ENCODE measurements at regions of chr9 and their contacts with region 1.

Region 1: DNA sequence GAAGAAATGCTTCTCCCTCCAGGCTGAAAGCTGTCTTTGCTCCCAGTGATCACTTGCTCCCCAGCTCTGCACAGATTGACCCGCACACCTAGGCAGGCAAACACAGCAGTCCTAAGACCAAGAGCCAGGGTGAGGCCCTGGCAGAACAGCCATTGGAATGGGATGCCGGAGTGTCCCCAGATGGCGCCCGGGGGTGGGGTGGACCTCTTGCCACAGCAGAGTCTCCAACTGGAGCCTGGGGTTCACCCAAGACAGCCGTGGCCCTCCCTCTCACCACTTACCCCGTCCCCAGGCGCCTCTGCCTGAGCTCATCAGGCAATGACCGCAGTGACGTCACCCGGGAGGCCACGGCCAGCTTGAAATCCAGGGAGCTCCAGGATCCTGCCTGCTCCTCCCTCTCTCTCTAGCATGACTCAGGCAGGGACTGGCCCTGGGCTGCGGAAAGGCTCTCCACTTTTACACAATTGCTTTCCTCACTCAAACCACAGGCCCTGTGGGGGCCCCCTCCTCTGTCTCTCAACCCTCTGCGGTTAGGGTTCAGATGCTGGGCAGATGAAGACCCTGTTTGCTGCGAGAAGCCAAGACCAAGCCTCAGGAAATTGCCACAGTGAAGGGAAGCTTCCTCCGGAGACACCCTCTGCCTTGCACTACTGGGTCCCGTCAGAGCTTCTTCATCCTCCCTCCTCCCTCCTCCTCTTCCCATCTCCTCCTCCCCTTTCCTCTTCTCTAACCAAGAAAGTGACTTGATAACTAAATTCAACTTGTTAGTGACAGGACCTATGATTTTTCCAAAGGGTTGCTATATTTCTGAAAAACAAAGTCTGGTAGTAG is 24.3 kb upstream of the PTGES start:
- DNase-seq: peak; percentile 62 to 88 (median 69)
- ATAC-seq: peak; percentile 62
- H3K4me3 ChIP-seq: no peak overlapping the region
- H3K27ac ChIP-seq: peak overlapping the region in 2 of 4 donors; percentile 11 to 16
- H3K4me1 ChIP-seq: peaks cover 11% of the 10 kb centered on the region
- H3K27me3 ChIP-seq: no peaks in the 10 kb centered on the region
- CTCF ChIP-seq: no peak
- POLR2A ChIP-seq: no peak

Region 2: DNA sequence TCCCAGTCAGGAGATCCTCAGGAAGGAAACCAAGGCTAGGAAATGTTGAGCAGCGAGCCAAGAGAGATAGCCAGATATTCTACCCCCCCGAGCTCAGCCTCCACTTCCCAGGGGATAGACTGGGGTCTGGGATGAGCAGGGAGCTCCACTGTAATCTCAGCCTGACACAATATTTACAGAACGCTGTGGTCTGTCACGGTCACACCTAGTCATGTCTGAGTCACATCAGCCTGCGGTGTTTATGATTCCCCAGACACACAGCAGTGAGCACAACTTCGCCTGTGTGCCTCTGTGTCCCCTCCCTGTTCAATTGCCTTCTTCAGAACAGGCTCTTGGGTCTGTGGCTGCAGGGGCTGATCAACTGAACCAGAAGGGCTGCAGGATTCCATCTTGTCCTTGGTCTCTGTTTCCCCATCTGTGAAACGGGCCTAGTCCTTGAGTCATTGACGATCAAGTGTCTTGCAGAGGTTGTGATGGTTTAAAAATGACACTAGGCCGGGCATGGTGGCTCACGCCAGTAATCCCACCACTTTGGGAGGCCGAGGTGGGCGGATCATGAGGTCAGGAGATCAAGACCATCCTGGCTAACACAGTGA is 120.3 kb before region 1 on chr9:
- intact Hi-C with region 1: loop called (anchors 10 kb)
- DNase-seq: no peak
- ATAC-seq: no peak
- H3K4me3 ChIP-seq: no peak overlapping the region
- H3K27ac ChIP-seq: no peak overlapping the region
- H3K4me1 ChIP-seq: peaks cover 3% of the 10 kb centered on the region
- H3K27me3 ChIP-seq: no peaks in the 10 kb centered on the region
- CTCF ChIP-seq: no peak
- POLR2A ChIP-seq: no peak

Region 3: DNA sequence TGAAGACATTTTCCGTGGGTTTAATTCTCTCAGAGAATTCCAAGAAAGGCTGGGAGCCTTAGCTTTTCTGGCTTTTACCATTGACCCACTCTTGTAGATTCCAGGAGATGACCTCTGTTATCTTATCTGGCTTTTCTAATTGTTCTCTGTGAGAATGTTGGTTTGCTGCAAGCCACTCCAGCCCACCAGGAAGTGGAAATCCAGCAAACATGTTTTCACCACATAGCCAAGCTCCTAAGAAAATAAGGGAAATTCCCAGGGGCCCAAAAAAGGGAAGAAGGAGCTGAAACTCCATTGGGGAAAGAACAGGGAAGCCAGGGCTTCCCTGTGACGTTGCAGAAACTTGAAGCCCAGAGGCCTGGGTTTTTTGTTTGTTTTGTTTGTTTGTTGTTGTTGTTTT is 296.2 kb after region 1 on chr9:
- intact Hi-C with region 1: no loop called
- DNase-seq: no peak
- ATAC-seq: no peak
- H3K4me3 ChIP-seq: no peak overlapping the region
- H3K27ac ChIP-seq: peak overlapping the region in 2 of 4 donors; percentile 18 to 48
- H3K4me1 ChIP-seq: peaks cover 16% of the 10 kb centered on the region
- H3K27me3 ChIP-seq: no peaks in the 10 kb centered on the region
- CTCF ChIP-seq: no peak
- POLR2A ChIP-seq: no peak